ENCODE measurements at regions of chr15 and their contacts with region 1.

Region 1: DNA sequence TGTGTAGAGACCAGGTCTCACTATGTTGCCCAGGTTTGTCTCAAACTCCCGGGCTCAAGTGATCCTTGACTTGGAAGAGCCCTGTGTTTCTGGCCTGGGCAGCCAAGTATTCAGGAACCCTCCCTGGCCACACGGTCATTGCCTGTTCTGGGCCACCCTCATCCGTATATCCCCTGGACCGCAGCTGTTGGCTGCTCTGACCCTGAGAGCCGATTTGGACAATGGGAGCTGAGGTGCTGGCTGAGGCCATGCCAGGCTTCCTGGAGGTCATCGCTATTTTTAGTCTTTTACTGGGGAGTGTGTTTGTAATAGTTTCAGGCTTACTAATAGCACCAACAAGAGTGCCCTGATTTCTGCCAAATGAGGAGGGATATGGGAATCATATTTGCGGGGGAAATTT is 60.7 kb downstream of the ADAMTS7 start:
- DNase-seq: no peak
- CTCF ChIP-seq: no peak

Region 2: GRCh38 chr15:78715930-78716329 is 34.6 kb before region 1 on chr15:
- CTCF ChIA-PET with region 1: no interaction called
- POLR2A ChIA-PET with region 1: no interaction called
- DNase-seq: no peak
- CTCF ChIP-seq: no peak

Region 3: GRCh38 chr15:78739996-78740903 is 10.3 kb before region 1 on chr15:
- CTCF ChIA-PET with region 1: interaction called, 29 read pairs
- POLR2A ChIA-PET with region 1: no interaction called
- DNase-seq: peak; percentile 41
- CTCF ChIP-seq: peak; percentile 57

Region 4: DNA sequence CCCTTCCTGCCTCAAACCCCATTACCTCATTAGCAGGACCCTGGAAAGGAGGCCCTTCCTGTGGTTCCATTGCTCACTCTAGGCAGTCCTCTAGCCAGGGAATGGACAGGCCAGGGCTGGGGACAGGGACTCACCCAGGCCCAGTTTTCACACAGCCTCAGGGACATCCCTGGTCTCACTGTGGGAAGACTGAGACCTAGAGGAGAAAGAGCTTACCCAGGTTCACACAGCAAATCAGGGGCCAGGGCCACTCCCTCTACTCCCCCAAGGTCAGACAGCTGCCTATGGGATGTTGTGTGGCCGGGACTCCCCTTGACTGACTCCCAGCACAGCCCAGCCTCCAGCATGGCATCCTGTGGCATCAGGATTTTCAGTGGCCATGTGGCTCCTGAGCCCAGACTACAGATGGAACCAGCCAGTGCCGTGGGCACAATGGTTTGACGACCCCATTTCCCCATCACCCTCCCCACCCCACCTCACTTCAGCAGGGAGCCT is 11.4 kb after region 1 on chr15:
- CTCF ChIA-PET with region 1: interaction called, 10 read pairs
- POLR2A ChIA-PET with region 1: no interaction called
- DNase-seq: no peak
- CTCF ChIP-seq: no peak

Region 5: GRCh38 chr15:78772738-78773137 is 22.2 kb after region 1 on chr15:
- CTCF ChIA-PET with region 1: no interaction called
- POLR2A ChIA-PET with region 1: no interaction called
- DNase-seq: no peak
- CTCF ChIP-seq: no peak

Measured in GM10248 (cell line).